ENCODE measurements at regions of chr13 and their contacts with region 1.

Region 1: GRCh38 chr13:98653463-98653985 is 76.6 kb upstream of the STK24 start:
- DNase-seq: peak; percentile 85
- CTCF ChIP-seq: peak; percentile 92

Region 2: DNA sequence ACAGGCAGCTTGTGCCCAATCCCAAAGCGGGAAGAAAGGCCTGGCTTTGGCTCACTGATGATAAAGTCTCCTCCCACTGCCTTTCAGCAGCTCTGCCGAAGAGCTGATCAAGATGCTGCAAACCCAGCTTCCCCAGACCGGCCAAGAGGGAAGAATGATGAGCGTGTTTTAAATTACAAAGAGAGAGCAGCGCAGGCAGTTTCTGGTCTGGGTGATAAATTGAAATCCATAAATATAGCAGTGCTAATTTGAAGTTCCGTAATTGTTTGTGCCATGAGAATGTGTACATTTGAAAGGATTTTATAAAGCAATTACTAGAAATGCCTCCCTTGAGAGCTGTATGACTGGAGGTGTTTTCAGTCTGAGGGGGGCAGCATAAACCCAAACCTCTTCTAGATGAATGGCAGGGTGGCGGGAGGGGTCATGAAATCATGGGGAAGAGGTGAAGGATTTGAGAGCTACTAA is 248.4 kb before region 1 on chr13:
- CTCF ChIA-PET with region 1: interaction called, 12 read pairs
- POLR2A ChIA-PET with region 1: no interaction called
- DNase-seq: no peak
- CTCF ChIP-seq: peak; percentile 5

Region 3: DNA sequence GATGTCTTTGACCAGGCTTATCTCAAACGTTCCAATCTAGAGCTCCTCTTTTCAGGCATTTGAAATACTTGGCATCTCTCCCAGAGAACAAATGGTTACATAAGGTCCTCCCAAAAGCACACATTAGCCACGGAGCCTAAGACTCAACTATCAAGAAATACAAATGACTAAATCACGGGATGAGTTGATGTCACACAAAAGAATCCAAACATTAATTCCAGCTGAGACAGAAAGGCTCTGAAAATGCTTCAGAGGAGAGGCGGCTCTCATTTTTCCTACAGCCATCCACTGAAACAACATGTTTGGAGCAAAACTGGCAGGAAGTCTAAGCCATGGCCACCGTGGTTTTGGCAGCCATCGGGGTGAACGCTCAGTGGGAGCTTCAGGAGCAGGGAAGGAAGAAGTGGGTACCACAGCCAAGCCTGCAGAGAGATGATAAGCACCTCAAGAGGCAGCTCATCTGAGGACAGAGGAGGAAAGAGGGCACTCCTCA is 199.1 kb before region 1 on chr13:
- CTCF ChIA-PET with region 1: interaction called, 23 read pairs
- POLR2A ChIA-PET with region 1: no interaction called
- DNase-seq: no peak
- CTCF ChIP-seq: no peak

Region 4: DNA sequence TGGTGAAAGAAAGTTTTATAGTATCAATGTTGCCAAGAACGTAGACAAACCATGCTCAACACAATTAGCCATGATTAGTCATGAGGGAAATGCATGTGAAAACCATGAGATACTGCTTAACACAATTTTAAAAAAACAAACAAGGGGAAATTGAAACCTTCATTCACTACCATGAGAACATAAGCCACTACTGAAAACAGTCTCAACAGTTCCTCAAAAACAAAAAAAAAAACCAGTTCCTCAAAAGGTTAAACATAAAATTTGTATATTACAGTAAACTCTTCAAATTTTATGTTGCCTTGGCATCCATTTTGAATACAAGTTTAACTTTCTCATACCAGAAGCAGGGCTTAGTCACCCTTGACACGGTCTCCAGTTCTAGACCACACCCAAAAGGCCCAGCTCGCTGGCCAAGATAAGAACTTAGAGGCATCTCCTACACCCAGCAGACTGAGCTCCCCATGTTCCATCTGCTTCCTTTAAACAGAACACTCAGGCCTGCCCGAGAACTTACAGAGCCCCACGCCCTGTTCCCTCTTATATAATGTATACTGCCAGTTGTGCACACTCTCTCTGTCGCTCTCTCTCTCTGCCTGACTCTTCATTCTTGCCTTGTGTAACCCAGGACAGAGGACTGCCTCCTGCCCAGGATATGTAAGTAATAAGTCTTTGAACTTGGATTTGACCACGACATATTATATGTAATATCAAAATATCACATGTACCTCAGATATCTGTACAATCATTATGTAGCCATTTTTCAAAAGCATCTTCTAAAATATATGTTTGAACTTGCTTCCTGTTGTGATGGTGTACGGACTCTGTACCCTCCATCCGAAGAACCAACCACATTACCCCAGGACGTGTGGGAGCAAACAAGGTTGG is 144.0 kb before region 1 on chr13:
- CTCF ChIA-PET with region 1: interaction called, 11 read pairs
- POLR2A ChIA-PET with region 1: no interaction called
- DNase-seq: no peak
- CTCF ChIP-seq: no peak

Region 5: DNA sequence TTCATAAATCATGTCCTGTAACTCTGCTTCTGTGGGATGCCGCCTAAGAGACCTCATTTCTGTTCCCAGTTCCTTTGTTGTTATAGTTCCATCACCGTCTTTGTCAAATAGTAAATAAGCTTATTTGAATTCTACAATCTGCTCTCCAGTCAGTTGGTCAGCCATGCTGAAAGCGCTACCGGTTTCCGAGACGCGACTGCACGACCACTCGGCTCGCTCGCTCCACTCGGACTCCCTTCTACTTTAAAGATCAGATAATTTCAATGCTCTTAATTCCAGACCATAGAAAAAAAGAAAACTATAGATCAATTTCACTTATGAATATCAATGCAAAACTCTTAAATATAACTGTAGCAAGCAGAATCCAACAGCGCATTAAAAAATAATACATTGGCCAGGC is 12.4 kb before region 1 on chr13:
- CTCF ChIA-PET with region 1: interaction called, 28 read pairs
- POLR2A ChIA-PET with region 1: no interaction called
- DNase-seq: no peak
- CTCF ChIP-seq: no peak

Region 6: DNA sequence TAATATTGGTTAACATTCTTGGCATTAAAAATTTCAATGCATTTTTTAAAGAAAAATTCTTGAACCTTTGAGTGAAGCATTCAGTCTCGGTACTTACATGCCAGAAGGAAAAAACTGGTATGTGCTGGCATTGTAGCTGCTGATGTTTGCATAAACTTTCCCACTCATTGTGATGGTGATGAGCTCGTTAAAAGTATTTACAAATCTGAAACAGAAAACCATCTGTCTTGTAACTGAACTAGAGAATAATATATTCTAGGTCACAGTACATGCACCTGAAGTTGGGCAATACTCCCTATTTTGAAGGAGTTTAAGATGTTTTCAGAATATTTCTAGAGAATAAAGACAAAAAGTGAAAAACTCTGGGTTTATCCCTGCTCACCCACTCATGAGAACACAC is 34.8 kb after region 1 on chr13:
- CTCF ChIA-PET with region 1: interaction called, 10 read pairs
- POLR2A ChIA-PET with region 1: interaction called, 4 read pairs
- DNase-seq: no peak
- CTCF ChIP-seq: no peak

Measured in GM10248 (cell line).